ENCODE measurements at regions of chr1 and their contacts with region 1.

Region 1: GRCh38 chr1:24070821-24071393 is 41.0 kb downstream of the MYOM3 start:
- DNase-seq: peak; percentile 38 to 80 (median 71)
- ATAC-seq: peak; percentile 94
- H3K4me3 ChIP-seq: no peak overlapping the region
- H3K4me3 Mint-ChIP-seq: no peak overlapping the region
- H3K27ac ChIP-seq: no peak overlapping the region
- H3K27ac Mint-ChIP-seq: no peak overlapping the region
- H3K4me1 ChIP-seq: no peaks in the 10 kb centered on the region
- H3K4me1 Mint-ChIP-seq: peaks cover 4% of the 10 kb centered on the region
- H3K27me3 ChIP-seq: no peaks in the 10 kb centered on the region
- H3K27me3 Mint-ChIP-seq: peaks cover 3% of the 10 kb centered on the region
- CTCF ChIP-seq: peak; percentile 86

Region 2: DNA sequence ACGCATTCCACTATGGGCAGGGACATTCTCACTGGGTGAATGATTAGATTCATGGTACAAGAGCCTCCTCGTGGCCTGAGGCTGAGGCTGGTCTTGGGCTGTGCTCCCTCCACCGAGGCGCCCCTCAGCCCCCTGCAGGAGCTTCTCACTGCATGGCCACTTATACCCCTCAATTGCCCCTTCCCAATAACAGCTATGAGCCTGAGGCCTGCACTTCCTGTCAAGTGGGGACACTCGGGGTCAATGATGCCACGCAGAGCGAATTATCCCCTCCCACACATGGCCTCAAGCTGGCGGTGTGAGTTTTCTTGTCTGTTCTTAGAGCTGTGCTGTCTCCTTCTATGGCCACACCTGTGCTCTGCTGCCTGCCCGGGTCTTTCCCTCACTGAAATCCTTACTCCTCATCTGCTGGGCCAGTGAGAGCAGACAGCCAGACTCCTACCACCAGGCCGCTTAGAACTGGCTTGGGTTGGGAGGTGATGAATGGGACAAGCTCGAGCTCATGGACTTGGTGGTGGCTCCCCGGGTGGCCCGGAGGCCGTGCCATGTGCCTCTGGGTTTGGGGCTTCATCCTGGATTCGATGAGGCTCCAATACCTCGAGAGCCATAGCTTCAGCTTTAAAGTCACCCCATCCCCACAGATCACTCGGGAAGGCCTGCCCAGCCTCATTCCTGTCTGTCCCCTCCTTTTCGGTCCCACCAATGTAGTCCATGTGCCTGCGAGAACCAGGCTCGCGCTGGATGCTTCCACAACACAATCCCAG is 10.6 kb before region 1 on chr1:
- CTCF ChIA-PET with region 1: interaction called, 17 read pairs
- POLR2A ChIA-PET with region 1: no interaction called
- intact Hi-C with region 1: no loop called
- DNase-seq: no peak
- ATAC-seq: no peak
- H3K4me3 ChIP-seq: no peak overlapping the region
- H3K4me3 Mint-ChIP-seq: no peak overlapping the region
- H3K27ac ChIP-seq: no peak overlapping the region
- H3K27ac Mint-ChIP-seq: no peak overlapping the region
- H3K4me1 ChIP-seq: no peaks in the 10 kb centered on the region
- H3K4me1 Mint-ChIP-seq: no peaks in the 10 kb centered on the region
- H3K27me3 ChIP-seq: no peaks in the 10 kb centered on the region
- H3K27me3 Mint-ChIP-seq: no peaks in the 10 kb centered on the region
- CTCF ChIP-seq: no peak

Region 3: DNA sequence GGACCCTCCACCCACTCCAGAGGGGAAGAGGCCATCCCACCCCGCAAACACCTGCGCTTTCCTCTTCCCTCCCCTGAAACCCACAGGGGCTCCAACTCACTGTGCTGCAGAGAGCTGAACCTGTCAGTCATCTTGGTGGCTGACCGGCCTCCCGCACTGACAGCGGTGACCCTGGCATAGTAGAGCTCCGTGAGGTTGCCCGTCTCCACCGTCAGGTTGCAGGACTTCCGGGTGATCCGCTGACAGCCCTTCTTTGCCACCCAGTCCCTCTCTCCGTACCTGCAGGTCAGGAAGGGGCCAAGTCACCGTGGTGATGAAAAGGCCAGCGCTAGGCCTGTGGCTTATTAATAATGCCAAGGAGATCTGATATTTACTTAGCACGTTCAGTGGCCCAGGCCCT is 66.1 kb after region 1 on chr1:
- CTCF ChIA-PET with region 1: no interaction called
- POLR2A ChIA-PET with region 1: no interaction called
- intact Hi-C with region 1: no loop called
- DNase-seq: no peak
- ATAC-seq: no peak
- H3K4me3 ChIP-seq: no peak overlapping the region
- H3K4me3 Mint-ChIP-seq: no peak overlapping the region
- H3K27ac ChIP-seq: no peak overlapping the region
- H3K27ac Mint-ChIP-seq: no peak overlapping the region
- H3K4me1 ChIP-seq: no peaks in the 10 kb centered on the region
- H3K4me1 Mint-ChIP-seq: peaks cover 2% of the 10 kb centered on the region
- H3K27me3 ChIP-seq: no peaks in the 10 kb centered on the region
- H3K27me3 Mint-ChIP-seq: peaks cover 18% of the 10 kb centered on the region
- CTCF ChIP-seq: no peak